Heart left ventricle (tissue), 16 donors: ENCODE measurements at regions of chr12 and their contacts with region 1.

Region 1: GRCh38 chr12:58302485-58303011 is 361.2 kb downstream of the ATP23 start:
- DNase-seq: no peak
- ATAC-seq: no peak
- H3K4me3 ChIP-seq: no peak overlapping the region
- H3K27ac ChIP-seq: no peak overlapping the region
- H3K4me1 ChIP-seq: peaks cover 0 to 4% (median 0%) of the 10 kb centered on the region in 12 donors
- H3K27me3 ChIP-seq: no peaks in the 10 kb centered on the region
- CTCF ChIP-seq: peak in 7 of 12 donors; percentile 13 to 49 (median 28)
- POLR2A ChIP-seq: no peak

Region 2: DNA sequence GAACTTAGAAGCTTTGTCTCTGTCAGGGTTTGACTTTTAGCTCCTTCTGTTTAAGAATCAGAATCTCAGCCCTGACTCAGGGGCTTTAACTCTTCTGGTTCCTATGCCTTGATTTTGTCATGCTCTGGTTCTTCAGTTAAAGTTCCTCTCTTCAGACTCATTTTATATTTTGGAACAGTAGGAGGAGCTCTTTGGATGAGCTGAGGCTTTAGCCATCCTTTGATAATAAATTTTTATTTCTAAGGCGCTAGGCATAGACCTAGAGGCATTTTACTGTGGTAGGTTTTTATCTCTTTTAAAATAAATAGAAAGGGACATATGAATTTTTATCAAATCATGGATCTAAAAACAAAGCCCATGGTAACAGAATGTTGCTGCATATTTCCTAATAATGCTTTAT is 309.5 kb before region 1 on chr12:
- intact Hi-C with region 1: loop called in 2 of 10 experiments (anchors 10 kb)
- DNase-seq: no peak
- ATAC-seq: no peak
- H3K4me3 ChIP-seq: no peak overlapping the region
- H3K27ac ChIP-seq: no peak overlapping the region
- H3K4me1 ChIP-seq: no peaks in the 10 kb centered on the region
- H3K27me3 ChIP-seq: no peaks in the 10 kb centered on the region
- CTCF ChIP-seq: peak in 5 of 12 donors; percentile 8 to 37 (median 28)
- POLR2A ChIP-seq: no peak

Region 3: DNA sequence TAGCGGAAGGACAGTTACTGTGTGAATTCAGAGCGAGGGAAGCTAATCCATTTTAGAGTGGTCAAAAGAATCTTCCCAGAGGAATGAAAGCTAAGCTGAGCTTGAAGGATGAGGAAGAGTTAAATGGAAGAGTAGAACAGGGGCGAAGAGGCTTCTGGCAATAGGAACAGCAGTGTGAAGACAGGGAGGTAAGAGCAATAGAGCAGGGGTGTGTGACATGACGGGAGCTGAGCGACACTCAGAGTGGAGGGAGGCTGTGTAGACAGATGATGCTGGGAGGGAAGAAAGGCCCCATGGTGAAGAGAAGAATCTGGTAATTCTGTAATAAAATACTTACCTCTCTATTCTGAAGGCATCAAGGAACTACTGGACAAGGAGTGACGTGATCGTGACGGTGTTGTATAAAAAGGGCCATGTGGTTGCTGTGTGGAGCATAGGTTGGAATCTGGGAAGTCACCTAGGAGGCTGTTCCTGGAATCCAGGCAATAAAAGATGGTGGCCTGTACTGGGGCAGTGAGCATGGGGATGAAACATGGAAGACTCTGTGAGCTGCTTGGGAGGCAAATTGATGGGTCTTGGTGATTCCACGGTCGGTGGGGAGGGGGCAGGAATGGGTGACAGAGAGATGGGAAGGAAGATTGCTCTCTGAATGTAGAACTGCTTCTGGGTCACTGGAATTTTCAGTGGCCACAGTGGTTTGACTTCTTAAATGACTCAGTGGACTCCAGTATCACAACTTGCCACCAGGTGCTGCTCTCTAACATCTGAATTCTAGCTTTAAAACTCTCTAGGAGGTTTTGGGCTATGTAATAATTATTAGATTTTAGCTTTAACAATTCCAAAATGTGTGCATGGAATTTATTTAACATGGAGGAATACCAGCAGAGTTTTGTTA is 197.1 kb before region 1 on chr12:
- intact Hi-C with region 1: loop called in 1 of 10 experiments (anchors 5 kb)
- DNase-seq: no peak
- ATAC-seq: peak; percentile 59 to 69 (median 68)
- H3K4me3 ChIP-seq: no peak overlapping the region
- H3K27ac ChIP-seq: peak overlapping the region in 11 of 12 donors; percentile 11 to 90 (median 54)
- H3K4me1 ChIP-seq: peaks cover 0 to 18% (median 1%) of the 10 kb centered on the region in 12 donors
- H3K27me3 ChIP-seq: no peaks in the 10 kb centered on the region
- CTCF ChIP-seq: peak in 11 of 12 donors; percentile 14 to 55 (median 32)
- POLR2A ChIP-seq: no peak

Region 4: DNA sequence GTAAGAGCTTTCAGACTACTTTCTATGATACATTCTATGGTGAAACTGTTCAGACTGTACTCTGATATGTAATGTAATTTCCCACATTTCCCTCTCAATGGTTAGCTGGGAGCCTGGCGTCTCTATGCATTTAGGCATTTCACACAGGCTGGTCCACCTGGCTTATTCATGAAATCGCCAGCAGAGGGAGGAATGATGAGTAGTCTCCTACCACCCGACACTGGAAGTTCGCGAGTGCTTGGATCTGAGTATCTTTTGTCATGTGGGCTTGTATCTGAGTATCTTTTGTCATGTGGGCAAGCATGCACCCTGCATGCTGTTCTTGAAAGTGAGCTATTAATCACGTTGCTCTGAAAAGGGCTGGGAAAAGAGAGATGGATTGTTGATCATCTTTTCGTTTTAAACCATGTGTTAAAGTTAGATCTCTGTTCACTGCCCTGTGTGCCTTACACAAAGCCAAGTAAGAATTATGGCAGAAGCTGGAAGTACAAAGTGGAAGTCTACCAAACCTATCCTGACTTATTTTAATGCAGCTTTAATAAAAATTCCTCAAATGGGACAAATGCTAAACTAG is 126.2 kb before region 1 on chr12:
- intact Hi-C with region 1: loop called in 3 of 10 experiments (anchors 5 to 10 kb)
- DNase-seq: peak in 3 of 5 donors; percentile 20 to 45 (median 32)
- ATAC-seq: no peak
- H3K4me3 ChIP-seq: no peak overlapping the region
- H3K27ac ChIP-seq: no peak overlapping the region
- H3K4me1 ChIP-seq: peaks cover 0 to 4% (median 0%) of the 10 kb centered on the region in 12 donors
- H3K27me3 ChIP-seq: no peaks in the 10 kb centered on the region
- CTCF ChIP-seq: peak; percentile 18 to 64 (median 44)
- POLR2A ChIP-seq: no peak

Region 5: DNA sequence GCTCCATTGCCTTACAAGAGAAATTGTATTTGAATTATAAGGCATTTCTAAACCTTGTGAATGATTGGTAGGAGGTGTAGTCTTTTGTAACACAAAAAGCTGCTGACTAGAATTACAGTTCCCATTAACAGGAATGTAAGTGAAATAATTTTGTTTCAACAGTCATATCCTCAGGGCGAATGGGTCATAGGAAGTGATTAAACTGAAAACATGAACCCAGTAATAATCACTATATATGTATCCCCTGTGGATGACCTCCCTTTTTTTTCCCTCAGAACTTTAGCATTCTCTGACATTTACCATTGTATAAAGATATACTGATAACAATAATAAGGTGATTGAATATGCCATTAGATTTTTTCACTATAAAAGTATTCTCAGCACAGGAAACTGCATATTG is 48.9 kb before region 1 on chr12:
- intact Hi-C with region 1: no loop called
- DNase-seq: no peak
- ATAC-seq: no peak
- H3K4me3 ChIP-seq: no peak overlapping the region
- H3K27ac ChIP-seq: no peak overlapping the region
- H3K4me1 ChIP-seq: peaks cover 0 to 16% (median 10%) of the 10 kb centered on the region in 12 donors
- H3K27me3 ChIP-seq: no peaks in the 10 kb centered on the region
- CTCF ChIP-seq: no peak
- POLR2A ChIP-seq: no peak